Endothelial cell of umbilical vein (primary cell): ENCODE measurements at regions of chr7 and their contacts with region 1.

Region 1: GRCh38 chr7:112132051-112132694 is 74.0 kb downstream of the DOCK4 start:
- DNase-seq: peak; percentile 95
- H3K4me3 ChIP-seq: no peak overlapping the region
- H3K27ac ChIP-seq: peak overlapping the region; percentile 91
- H3K4me1 ChIP-seq: peaks cover 43% of the 10 kb centered on the region
- H3K27me3 ChIP-seq: no peaks in the 10 kb centered on the region
- CTCF ChIP-seq: no peak
- POLR2A ChIP-seq: no peak

Region 2: DNA sequence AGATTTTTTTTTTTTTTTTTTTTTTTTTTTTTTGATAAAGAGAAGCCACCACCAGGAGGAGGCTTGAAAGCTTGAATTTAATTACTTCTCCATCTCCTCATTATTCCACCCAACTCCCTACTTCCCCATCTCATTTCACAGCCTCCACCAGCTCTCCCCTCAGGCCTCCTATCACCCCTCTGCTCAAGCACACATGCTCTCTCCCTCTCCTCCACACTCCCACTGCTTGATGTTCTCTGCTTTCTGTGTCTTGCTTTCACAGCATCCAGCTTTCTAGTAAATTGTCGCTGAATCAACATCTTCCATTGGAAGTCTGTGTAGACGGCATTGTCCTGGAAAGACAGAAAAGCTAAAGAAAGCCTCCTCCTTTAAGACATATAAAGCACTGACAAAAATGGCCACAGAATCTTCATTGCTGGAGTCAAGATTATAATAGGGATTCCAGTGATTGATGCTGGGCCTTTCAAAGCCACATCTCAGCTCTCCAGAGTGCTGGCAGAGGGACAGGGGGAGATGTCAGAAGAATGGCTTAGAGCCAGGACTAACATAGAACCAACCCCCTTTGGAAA is 15.7 kb after region 1 on chr7:
- CTCF ChIA-PET with region 1: interaction called, 12 read pairs
- POLR2A ChIA-PET with region 1: no interaction called
- dilution Hi-C with region 1: no loop called
- intact Hi-C with region 1: no loop called
- DNase-seq: peak; percentile 36
- H3K4me3 ChIP-seq: no peak overlapping the region
- H3K27ac ChIP-seq: no peak overlapping the region
- H3K4me1 ChIP-seq: peaks cover 18% of the 10 kb centered on the region
- H3K27me3 ChIP-seq: no peaks in the 10 kb centered on the region
- CTCF ChIP-seq: no peak
- POLR2A ChIP-seq: no peak

Region 3: DNA sequence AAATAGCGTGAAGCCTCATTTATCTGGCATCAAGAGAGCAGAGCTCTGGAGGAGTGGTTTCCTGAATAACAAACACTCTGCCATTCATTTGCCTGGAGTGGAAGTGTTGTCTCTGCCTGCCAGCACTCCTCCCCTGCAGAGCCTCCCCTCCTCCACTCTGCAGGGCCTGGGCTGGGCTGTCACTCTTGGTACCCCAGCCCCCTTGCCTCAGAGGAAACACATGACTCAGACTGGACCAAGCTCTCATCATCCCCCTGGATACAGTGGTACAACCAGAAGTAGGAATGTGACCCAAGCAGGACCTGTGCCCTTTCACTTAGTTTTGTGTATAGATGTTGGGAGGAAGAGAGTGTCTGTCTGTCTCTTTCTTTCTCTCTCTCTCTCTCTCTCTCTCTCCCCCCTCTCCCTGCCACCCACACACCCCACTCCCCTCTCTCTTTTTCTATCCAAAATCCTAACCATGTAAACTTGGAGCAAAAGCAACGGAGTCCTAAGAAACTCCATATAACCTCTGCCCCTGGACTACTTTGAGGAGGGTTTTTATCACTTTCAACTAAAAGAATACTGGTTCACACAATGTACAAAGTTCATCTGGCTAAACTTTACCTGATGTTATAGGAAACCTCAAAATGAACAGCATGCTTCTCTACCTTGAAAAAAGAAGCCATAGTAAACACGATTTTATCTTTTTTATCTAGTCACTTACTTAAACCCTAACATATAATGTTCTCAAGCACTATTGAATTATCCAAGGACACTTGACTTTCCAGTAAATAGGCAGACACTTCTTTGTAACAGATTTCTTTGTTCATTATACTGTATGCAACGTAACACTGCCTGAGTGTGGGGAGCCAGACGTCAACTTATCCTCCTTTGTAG is 30.2 kb after region 1 on chr7:
- CTCF ChIA-PET with region 1: interaction called, 5 read pairs
- POLR2A ChIA-PET with region 1: no interaction called
- dilution Hi-C with region 1: no loop called
- intact Hi-C with region 1: loop called (anchors 1 kb)
- DNase-seq: peak; percentile 98
- H3K4me3 ChIP-seq: peak overlapping the region in 1 of 3 experiments; percentile 13
- H3K27ac ChIP-seq: peak overlapping the region; percentile 81
- H3K4me1 ChIP-seq: peaks cover 70% of the 10 kb centered on the region
- H3K27me3 ChIP-seq: no peaks in the 10 kb centered on the region
- CTCF ChIP-seq: no peak
- POLR2A ChIP-seq: no peak

Region 4: DNA sequence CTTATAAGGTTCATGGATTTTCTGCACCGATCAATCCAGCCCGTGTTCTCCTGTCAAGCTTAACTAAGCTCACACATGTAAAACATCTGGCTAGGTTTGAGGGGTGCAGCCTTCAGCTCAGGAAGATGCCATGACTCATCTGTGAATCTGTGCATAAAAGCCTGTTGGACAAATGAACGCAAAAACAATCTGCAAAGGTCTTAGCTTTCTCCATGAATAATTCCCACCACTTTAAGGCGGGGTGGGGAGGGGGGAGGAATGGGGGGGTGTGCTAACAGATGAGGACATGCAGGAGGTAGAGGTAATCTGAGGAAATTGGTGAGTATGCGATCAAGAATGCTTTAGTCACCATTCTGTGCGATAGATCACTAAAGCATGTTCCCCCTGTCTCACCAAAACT is 69.2 kb after region 1 on chr7:
- CTCF ChIA-PET with region 1: no interaction called
- POLR2A ChIA-PET with region 1: interaction called, 3 read pairs
- dilution Hi-C with region 1: no loop called
- intact Hi-C with region 1: loop called (anchors 1 kb)
- DNase-seq: peak; percentile 57
- H3K4me3 ChIP-seq: no peak overlapping the region
- H3K27ac ChIP-seq: no peak overlapping the region
- H3K4me1 ChIP-seq: peaks cover 59% of the 10 kb centered on the region
- H3K27me3 ChIP-seq: no peaks in the 10 kb centered on the region
- CTCF ChIP-seq: no peak
- POLR2A ChIP-seq: no peak